Endothelial cell of umbilical vein (primary cell): ENCODE measurements at regions of chrX and their contacts with region 1.

Region 1: GRCh38 chrX:150715184-150715583 is 22.0 kb downstream of the MTMR1 start:
- DNase-seq: peak; percentile 16
- H3K4me3 ChIP-seq: no peak overlapping the region
- H3K27ac ChIP-seq: peak overlapping the region; percentile 18
- H3K4me1 ChIP-seq: peaks cover 3% of the 10 kb centered on the region
- H3K27me3 ChIP-seq: no peaks in the 10 kb centered on the region
- CTCF ChIP-seq: no peak
- POLR2A ChIP-seq: no peak

Region 2: GRCh38 chrX:149950681-149951080 is 764.5 kb before region 1 on chrX:
- CTCF ChIA-PET with region 1: interaction called, 4 read pairs
- POLR2A ChIA-PET with region 1: no interaction called
- dilution Hi-C with region 1: no loop called
- intact Hi-C with region 1: loop called (anchors 5 kb)
- DNase-seq: peak; percentile 62
- H3K4me3 ChIP-seq: no peak overlapping the region
- H3K27ac ChIP-seq: no peak overlapping the region
- H3K4me1 ChIP-seq: no peaks in the 10 kb centered on the region
- H3K27me3 ChIP-seq: no peaks in the 10 kb centered on the region
- CTCF ChIP-seq: peak; percentile 22 to 25
- POLR2A ChIP-seq: no peak

Region 3: GRCh38 chrX:150449313-150449712 is 265.9 kb before region 1 on chrX:
- CTCF ChIA-PET with region 1: no interaction called
- POLR2A ChIA-PET with region 1: no interaction called
- dilution Hi-C with region 1: no loop called
- intact Hi-C with region 1: loop called (anchors 2 kb)
- DNase-seq: no peak
- H3K4me3 ChIP-seq: no peak overlapping the region
- H3K27ac ChIP-seq: no peak overlapping the region
- H3K4me1 ChIP-seq: peaks cover 13% of the 10 kb centered on the region
- H3K27me3 ChIP-seq: no peaks in the 10 kb centered on the region
- CTCF ChIP-seq: no peak
- POLR2A ChIP-seq: no peak

Region 4: DNA sequence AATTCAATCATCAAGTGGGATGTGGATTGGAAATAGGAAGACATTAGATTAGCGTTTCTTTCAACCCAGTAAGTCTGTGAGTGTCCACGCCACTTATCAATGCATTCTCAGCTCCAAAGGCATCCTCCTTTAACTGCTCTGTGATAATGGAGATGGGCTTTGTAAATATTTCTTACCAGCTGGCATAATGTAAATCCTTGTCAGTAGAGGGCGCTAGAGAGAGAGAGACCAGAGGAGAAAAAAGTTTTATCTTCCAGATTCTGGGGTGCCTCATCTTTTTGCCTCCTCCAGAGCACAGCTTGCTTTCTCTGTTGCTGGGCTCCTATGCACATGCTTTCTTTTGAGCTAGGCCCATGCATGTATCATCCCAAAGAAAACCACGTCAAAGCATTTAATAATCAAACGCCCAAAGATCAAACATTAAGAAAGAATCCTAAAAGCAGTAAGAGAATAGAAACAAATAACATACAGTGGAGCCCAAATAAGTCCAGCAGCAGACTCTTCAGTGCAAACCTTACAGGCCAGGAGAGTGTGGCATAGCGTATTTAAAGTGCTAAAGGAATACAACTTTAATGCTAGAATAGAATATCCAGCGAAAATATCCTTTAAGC is 31.5 kb before region 1 on chrX:
- CTCF ChIA-PET with region 1: interaction called, 29 read pairs
- POLR2A ChIA-PET with region 1: no interaction called
- dilution Hi-C with region 1: no loop called
- intact Hi-C with region 1: loop called (anchors 1 kb)
- DNase-seq: peak; percentile 31
- H3K4me3 ChIP-seq: no peak overlapping the region
- H3K27ac ChIP-seq: no peak overlapping the region
- H3K4me1 ChIP-seq: peaks cover 3% of the 10 kb centered on the region
- H3K27me3 ChIP-seq: no peaks in the 10 kb centered on the region
- CTCF ChIP-seq: peak; percentile 27 to 42
- POLR2A ChIP-seq: no peak

Region 5: GRCh38 chrX:150697641-150698040 is 17.5 kb before region 1 on chrX:
- CTCF ChIA-PET with region 1: interaction called, 11 read pairs
- POLR2A ChIA-PET with region 1: no interaction called
- dilution Hi-C with region 1: no loop called
- intact Hi-C with region 1: no loop called
- DNase-seq: no peak
- H3K4me3 ChIP-seq: no peak overlapping the region
- H3K27ac ChIP-seq: no peak overlapping the region
- H3K4me1 ChIP-seq: peaks cover 6% of the 10 kb centered on the region
- H3K27me3 ChIP-seq: no peaks in the 10 kb centered on the region
- CTCF ChIP-seq: no peak
- POLR2A ChIP-seq: no peak

Region 6: GRCh38 chrX:150704030-150704613 is 11.1 kb before region 1 on chrX:
- CTCF ChIA-PET with region 1: interaction called, 11 read pairs
- POLR2A ChIA-PET with region 1: no interaction called
- dilution Hi-C with region 1: no loop called
- intact Hi-C with region 1: no loop called
- DNase-seq: peak; percentile 79
- H3K4me3 ChIP-seq: no peak overlapping the region
- H3K27ac ChIP-seq: peak overlapping the region; percentile 75
- H3K4me1 ChIP-seq: peaks cover 15% of the 10 kb centered on the region
- H3K27me3 ChIP-seq: no peaks in the 10 kb centered on the region
- CTCF ChIP-seq: no peak
- POLR2A ChIP-seq: no peak

Region 7: DNA sequence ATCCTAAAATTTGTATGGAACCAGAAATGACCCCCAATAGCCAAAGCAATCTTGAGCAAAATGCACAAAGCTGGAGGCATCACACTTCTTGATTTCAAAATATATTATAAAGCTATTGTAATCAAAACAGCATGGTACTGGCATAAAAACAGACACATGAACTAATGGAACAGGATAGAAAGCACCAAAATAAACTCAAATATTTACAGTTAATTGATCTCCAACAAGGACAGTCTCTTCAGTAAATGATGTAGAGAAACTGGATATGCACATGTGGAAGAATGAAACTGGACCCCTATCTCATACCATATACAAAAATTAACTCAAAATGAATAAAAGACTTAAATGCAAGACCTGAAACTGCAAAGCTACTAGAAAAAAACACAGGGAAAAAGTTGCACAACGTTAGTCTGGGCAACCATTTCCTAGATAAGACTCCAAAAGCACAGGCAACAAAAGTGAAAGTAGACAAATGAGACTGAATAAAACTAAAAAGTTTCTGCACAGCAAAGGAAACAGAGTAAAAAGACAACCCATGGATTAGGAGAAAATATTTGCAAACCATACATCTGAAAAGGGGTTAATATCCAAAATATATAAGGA is 118.4 kb after region 1 on chrX:
- CTCF ChIA-PET with region 1: no interaction called
- POLR2A ChIA-PET with region 1: no interaction called
- dilution Hi-C with region 1: no loop called
- intact Hi-C with region 1: no loop called
- DNase-seq: no peak
- H3K4me3 ChIP-seq: no peak overlapping the region
- H3K27ac ChIP-seq: no peak overlapping the region
- H3K4me1 ChIP-seq: no peaks in the 10 kb centered on the region
- H3K27me3 ChIP-seq: no peaks in the 10 kb centered on the region
- CTCF ChIP-seq: no peak
- POLR2A ChIP-seq: no peak